Activated CD4-positive, alpha-beta T cell treated with anti-CD3 and anti-CD28 coated beads for 36 hours (primary cell): ENCODE measurements at regions of chr7 and their contacts with region 1.

Region 1: GRCh38 chr7:80346704-80347103 is 165.2 kb downstream of the GNAT3 start:
- DNase-seq: no peak
- ATAC-seq: peak; percentile 97
- H3K4me3 Mint-ChIP-seq: no peak overlapping the region
- H3K27ac Mint-ChIP-seq: no peak overlapping the region
- H3K4me1 Mint-ChIP-seq: peaks cover 11% of the 10 kb centered on the region
- H3K27me3 Mint-ChIP-seq: no peaks in the 10 kb centered on the region

Region 2: DNA sequence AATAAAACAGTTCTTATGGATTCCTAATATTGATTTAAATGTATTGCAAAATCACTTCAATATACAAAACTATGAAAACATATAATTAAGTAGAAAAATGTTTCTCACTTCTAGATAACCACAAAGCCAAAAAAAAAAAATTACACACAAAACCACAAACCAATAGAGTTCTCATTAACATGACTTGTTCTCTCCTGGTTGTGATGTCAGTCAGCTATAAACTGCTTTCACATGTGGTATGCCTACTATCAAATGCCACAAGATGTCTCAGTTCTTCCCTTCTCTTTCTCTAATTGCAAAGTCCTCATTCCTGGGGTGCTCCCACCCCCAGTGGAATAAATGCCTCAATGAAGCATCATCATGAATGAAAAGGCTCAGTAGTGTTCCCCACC is 195.4 kb before region 1 on chr7:
- CTCF ChIA-PET with region 1: no interaction called
- POLR2A ChIA-PET with region 1: no interaction called
- intact Hi-C with region 1: loop called in 1 of 2 experiments (anchors 1 kb)
- DNase-seq: peak; percentile 61
- ATAC-seq: peak; percentile 96
- H3K4me3 Mint-ChIP-seq: no peak overlapping the region
- H3K27ac Mint-ChIP-seq: no peak overlapping the region
- H3K4me1 Mint-ChIP-seq: peaks cover 25% of the 10 kb centered on the region
- H3K27me3 Mint-ChIP-seq: peaks cover 19% of the 10 kb centered on the region

Region 3: DNA sequence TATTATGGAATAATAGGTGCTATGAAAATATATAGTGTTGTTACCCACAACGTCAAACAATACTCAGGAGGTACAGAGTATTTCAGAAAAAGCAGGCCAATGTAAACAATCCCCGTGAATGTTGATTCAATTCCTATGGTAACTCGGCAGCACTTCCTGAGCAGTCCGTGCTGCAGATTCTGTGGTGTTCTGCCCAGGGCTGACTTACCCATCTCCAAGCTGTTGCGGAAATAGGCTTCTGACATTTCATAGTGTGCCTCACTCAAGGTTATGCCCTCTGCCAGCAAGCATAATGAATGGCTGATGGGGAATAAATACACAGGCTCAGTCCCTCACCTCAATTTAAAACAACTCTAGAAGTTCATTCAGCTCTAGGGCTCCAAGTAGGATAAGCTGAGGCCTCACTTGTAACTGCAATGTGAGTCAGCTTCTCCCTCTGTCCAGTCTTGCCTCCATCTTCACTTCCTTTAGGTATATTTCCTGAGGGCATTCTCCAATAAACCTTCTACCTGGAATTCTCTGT is 34.5 kb before region 1 on chr7:
- CTCF ChIA-PET with region 1: no interaction called
- POLR2A ChIA-PET with region 1: no interaction called
- intact Hi-C with region 1: loop called in 1 of 2 experiments (anchors 5 kb)
- DNase-seq: peak; percentile 25
- ATAC-seq: peak; percentile 78
- H3K4me3 Mint-ChIP-seq: no peak overlapping the region
- H3K27ac Mint-ChIP-seq: peak overlapping the region; percentile 13
- H3K4me1 Mint-ChIP-seq: peaks cover 27% of the 10 kb centered on the region
- H3K27me3 Mint-ChIP-seq: no peaks in the 10 kb centered on the region